Psoas muscle (tissue), 8 donors: ENCODE measurements at regions of chrX and their contacts with region 1.

Region 1: DNA sequence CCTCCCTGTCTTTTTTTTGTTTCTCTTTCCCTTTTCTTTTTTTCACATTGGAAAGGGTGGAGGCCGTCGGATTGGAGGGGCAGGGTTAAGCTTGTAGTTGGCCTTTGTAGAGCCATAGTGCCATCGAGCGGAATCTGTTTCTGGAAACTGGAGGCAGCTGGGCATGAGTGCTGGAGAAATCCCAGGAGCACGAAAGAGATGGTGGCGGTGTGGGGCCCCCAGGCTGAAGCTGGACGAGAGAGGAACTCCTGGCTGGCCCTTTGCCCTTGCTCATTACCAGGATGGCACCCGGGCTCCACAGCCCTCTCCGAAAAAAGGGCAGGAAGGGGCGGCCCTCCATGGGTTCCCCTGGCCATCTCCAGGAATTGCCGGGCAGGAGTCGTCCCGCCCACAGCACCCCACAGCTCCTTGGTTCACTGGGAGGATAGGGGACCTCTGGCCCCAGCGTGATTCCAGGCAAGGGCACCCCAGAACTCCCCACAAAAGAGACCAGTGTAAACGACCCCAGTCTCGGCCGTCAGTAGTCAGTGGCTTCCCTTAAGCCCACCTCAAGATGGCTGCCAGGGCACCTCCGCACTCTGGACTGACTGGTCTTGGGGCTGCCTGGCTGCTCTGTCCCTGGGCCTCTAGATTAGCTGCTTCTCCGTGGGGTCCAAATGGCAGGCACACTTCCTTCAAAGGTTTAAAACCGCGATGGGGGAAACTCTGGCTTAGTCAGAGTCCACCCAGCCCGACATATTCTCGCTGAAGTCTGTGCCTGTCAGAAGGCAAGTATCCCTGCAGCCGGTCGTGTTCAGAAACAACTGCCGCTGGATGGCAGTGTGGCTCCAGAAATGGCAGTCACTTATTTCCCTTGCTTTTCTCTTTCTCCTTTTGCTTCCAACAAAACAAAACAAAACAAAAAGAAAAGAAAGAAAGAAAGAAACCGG is 74.1 kb downstream of the NBDY start:
- DNase-seq: peak; percentile 83 to 94
- ATAC-seq: peak; percentile 73 to 84 (median 76)
- H3K4me3 ChIP-seq: peak overlapping the region; percentile 84
- H3K27ac ChIP-seq: peak overlapping the region; percentile 92
- H3K4me1 ChIP-seq: peaks cover 29% of the 10 kb centered on the region
- H3K27me3 ChIP-seq: no peaks in the 10 kb centered on the region
- CTCF ChIP-seq: peak; percentile 70

Region 2: GRCh38 chrX:56744996-56745395 is 58.2 kb before region 1 on chrX:
- intact Hi-C with region 1: no loop called
- DNase-seq: no peak
- ATAC-seq: peak in 2 of 4 donors; percentile 47 to 49
- H3K4me3 ChIP-seq: no peak overlapping the region
- H3K27ac ChIP-seq: no peak overlapping the region
- H3K4me1 ChIP-seq: no peaks in the 10 kb centered on the region
- H3K27me3 ChIP-seq: peaks cover 0 to 40% (median 0%) of the 10 kb centered on the region in 3 donors
- CTCF ChIP-seq: no peak

Region 3: GRCh38 chrX:56757327-56757726 is 45.9 kb before region 1 on chrX:
- intact Hi-C with region 1: loop called in 1 of 2 experiments (anchors 5 kb)
- DNase-seq: no peak
- ATAC-seq: no peak
- H3K4me3 ChIP-seq: no peak overlapping the region
- H3K27ac ChIP-seq: no peak overlapping the region
- H3K4me1 ChIP-seq: no peaks in the 10 kb centered on the region
- H3K27me3 ChIP-seq: peaks cover 0 to 6% (median 0%) of the 10 kb centered on the region in 3 donors
- CTCF ChIP-seq: no peak

Region 4: DNA sequence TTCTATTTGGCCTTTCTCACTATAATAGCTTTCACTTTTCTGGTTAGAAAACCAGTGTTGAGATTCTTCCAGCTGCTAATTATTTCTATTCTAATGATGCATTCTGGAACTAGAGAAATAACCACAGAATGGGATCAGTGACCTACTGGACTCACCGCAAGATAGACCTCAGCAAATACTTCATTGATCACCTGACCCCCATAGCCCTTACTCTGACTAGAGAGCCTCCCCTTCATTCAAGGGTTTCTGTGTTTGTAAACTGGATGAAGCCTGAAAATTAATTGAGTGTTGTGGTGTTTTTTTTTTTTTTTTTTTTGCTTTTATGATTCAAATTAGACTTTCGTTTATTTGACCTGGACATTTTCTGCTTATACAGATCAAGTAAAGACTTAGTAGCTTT is 22.8 kb after region 1 on chrX:
- intact Hi-C with region 1: no loop called
- DNase-seq: no peak
- ATAC-seq: no peak
- H3K4me3 ChIP-seq: no peak overlapping the region
- H3K27ac ChIP-seq: no peak overlapping the region
- H3K4me1 ChIP-seq: no peaks in the 10 kb centered on the region
- H3K27me3 ChIP-seq: peaks cover 0 to 15% (median 0%) of the 10 kb centered on the region in 3 donors
- CTCF ChIP-seq: no peak

Region 5: DNA sequence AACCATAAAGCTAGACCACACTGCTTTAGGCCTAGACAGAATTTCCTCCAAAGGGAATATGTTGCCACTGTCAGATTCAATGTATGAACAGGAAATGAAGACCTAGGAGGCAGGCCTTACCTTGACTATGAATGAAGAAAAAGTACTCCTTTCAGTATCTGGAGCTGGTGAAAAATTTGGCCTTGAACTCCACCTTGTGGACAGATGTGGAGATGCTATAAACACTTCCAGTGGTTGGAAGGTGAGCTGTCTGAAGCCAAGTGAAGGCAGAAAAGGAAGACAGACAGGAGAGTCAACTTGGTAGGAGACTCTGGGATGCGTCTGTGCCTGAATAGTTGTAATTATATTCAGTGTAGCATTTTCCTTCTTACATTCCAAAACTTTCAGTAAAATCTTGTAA is 175.0 kb after region 1 on chrX:
- intact Hi-C with region 1: loop called (anchors 2 to 5 kb)
- DNase-seq: no peak
- ATAC-seq: peak; percentile 58 to 84 (median 70)
- H3K4me3 ChIP-seq: no peak overlapping the region
- H3K27ac ChIP-seq: no peak overlapping the region
- H3K4me1 ChIP-seq: no peaks in the 10 kb centered on the region
- H3K27me3 ChIP-seq: peaks cover 0 to 15% (median 0%) of the 10 kb centered on the region in 3 donors
- CTCF ChIP-seq: peak; percentile 71